Mammary epithelial cell (primary cell): ENCODE measurements at regions of chr13 and their contacts with region 1.

Region 1: GRCh38 chr13:46905247-46905646 is 8.4 kb upstream of the HTR2A start:
- DNase-seq: peak; percentile 33
- H3K4me3 ChIP-seq: no peak overlapping the region
- H3K27ac ChIP-seq: no peak overlapping the region
- H3K4me1 ChIP-seq: peaks cover 12% of the 10 kb centered on the region
- H3K27me3 ChIP-seq: no peaks in the 10 kb centered on the region
- CTCF ChIP-seq: peak; percentile 14 to 44

Region 2: GRCh38 chr13:46961719-46962118 is 56.5 kb after region 1 on chr13:
- CTCF ChIA-PET with region 1: no interaction called
- dilution Hi-C with region 1: no loop called
- in situ Hi-C with region 1: loop called in 1 of 2 experiments (anchors 10 kb)
- intact Hi-C with region 1: no loop called
- DNase-seq: peak; percentile 81
- H3K4me3 ChIP-seq: no peak overlapping the region
- H3K27ac ChIP-seq: no peak overlapping the region
- H3K4me1 ChIP-seq: peaks cover 18% of the 10 kb centered on the region
- H3K27me3 ChIP-seq: no peaks in the 10 kb centered on the region
- CTCF ChIP-seq: no peak